ENCODE measurements at regions of chr6 and their contacts with region 1.

Region 1: GRCh38 chr6:10487668-10488327 is 33.4 kb upstream of the GCNT2 start:
- DNase-seq: no peak

Region 2: GRCh38 chr6:10800829-10801535 is 313.2 kb after region 1 on chr6:
- intact Hi-C with region 1: loop called in 1 of 2 experiments (anchors 10 kb)
- DNase-seq: no peak